ENCODE measurements at regions of chr7 and their contacts with region 1.

Region 1: GRCh38 chr7:75738987-75739795 is 450 bp upstream of the HIP1 start:
- DNase-seq: peak; percentile 99
- H3K4me3 ChIP-seq: peak overlapping the region; percentile 19 to 97
- H3K4me3 Mint-ChIP-seq: peak overlapping the region; percentile 97 to 100 (median 98)
- H3K27ac ChIP-seq: peak overlapping the region; percentile 79
- H3K27ac Mint-ChIP-seq: peak overlapping the region; percentile 94 to 99 (median 98)
- H3K4me1 ChIP-seq: peaks cover 18% of the 10 kb centered on the region
- H3K4me1 Mint-ChIP-seq: peaks cover 7 to 21% (median 13%) of the 10 kb centered on the region in 4 donors
- H3K27me3 ChIP-seq: no peaks in the 10 kb centered on the region
- H3K27me3 Mint-ChIP-seq: peaks cover 1% of the 10 kb centered on the region in 2 donors

Region 2: DNA sequence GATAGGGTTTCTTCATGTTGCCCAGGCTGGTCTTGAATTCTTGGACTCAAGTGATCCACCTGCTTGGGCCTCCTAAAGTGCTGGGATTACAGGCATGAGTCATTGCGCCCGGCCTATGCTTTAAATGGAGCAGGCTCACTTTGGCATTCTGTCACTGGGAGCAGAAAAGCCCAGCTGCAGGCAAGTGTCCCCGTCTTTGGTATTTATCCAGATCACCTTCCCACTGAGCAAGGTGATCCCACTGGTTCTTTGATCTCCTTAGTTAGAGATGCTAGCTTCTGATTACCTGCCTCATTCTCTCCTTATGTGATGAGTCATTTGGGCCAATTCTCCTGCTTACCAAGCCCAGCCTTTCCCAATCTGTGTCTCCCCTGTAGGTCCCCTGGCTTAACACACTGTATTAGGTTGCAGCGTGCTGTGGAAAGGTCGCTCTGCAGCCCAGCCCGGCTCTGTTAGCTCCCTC is 207.8 kb before region 1 on chr7:
- CTCF ChIA-PET with region 1: no interaction called
- POLR2A ChIA-PET with region 1: no interaction called
- intact Hi-C with region 1: loop called (anchors 2 kb)
- DNase-seq: no peak
- H3K4me3 ChIP-seq: no peak overlapping the region
- H3K4me3 Mint-ChIP-seq: no peak overlapping the region
- H3K27ac ChIP-seq: no peak overlapping the region
- H3K27ac Mint-ChIP-seq: peak overlapping the region in 1 of 7 donors; percentile 4
- H3K4me1 ChIP-seq: peaks cover 10% of the 10 kb centered on the region
- H3K4me1 Mint-ChIP-seq: peaks cover 11 to 20% (median 14%) of the 10 kb centered on the region in 4 donors
- H3K27me3 ChIP-seq: no peaks in the 10 kb centered on the region
- H3K27me3 Mint-ChIP-seq: no peaks in the 10 kb centered on the region

Region 3: DNA sequence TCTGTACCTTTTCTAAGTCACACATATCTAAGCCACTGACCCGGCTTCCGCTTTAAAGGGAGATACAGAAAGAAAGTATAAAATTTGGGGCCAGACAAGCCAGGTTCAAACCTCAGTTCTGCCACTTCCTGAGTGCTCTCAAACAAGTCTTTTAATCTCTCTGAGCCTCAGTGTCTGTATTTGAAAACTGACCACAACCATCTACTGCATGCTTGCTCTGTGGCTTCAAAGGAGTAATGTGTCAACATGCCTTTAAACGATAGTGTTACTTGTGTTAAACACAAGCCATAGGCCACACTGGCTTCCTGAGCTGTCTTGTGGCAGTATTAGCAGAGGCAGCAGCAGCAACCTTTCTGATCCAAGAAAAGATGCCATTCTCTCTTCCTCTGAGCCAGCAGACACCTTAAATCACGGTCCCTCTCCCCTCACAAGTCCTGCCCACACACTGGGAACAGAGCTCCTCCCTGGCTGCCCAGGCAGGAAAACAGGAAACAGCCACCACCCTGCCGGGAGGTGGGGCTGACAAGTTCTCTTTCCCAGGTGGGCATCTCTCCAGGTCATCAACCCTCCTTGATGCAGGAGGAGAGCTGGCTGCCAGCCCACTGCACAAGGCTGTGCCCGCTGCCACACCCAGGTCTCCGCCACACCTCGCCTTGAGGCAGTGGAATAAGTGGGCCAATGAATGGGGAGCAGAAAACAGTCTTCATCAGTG is 11.2 kb before region 1 on chr7:
- CTCF ChIA-PET with region 1: no interaction called
- POLR2A ChIA-PET with region 1: interaction called, 24 read pairs
- intact Hi-C with region 1: no loop called
- DNase-seq: peak; percentile 63 to 76 (median 71)
- H3K4me3 ChIP-seq: peak overlapping the region in 1 of 2 donors; percentile 13
- H3K4me3 Mint-ChIP-seq: peak overlapping the region in 7 of 8 donors; percentile 51 to 86 (median 65)
- H3K27ac ChIP-seq: peak overlapping the region; percentile 30
- H3K27ac Mint-ChIP-seq: peak overlapping the region; percentile 67 to 92 (median 89)
- H3K4me1 ChIP-seq: peaks cover 29% of the 10 kb centered on the region
- H3K4me1 Mint-ChIP-seq: peaks cover 16 to 30% (median 22%) of the 10 kb centered on the region in 4 donors
- H3K27me3 ChIP-seq: no peaks in the 10 kb centered on the region
- H3K27me3 Mint-ChIP-seq: no peaks in the 10 kb centered on the region

Region 4: GRCh38 chr7:75762314-75762917 is 23.2 kb after region 1 on chr7:
- CTCF ChIA-PET with region 1: interaction called, 10 read pairs
- POLR2A ChIA-PET with region 1: no interaction called
- intact Hi-C with region 1: loop called (anchors 1 kb)
- DNase-seq: peak in 4 of 5 donors; percentile 50 to 58 (median 54)
- H3K4me3 ChIP-seq: no peak overlapping the region
- H3K4me3 Mint-ChIP-seq: no peak overlapping the region
- H3K27ac ChIP-seq: no peak overlapping the region
- H3K27ac Mint-ChIP-seq: no peak overlapping the region
- H3K4me1 ChIP-seq: no peaks in the 10 kb centered on the region
- H3K4me1 Mint-ChIP-seq: peaks cover 2 to 4% (median 4%) of the 10 kb centered on the region in 4 donors
- H3K27me3 ChIP-seq: no peaks in the 10 kb centered on the region
- H3K27me3 Mint-ChIP-seq: peaks cover 0 to 4% of the 10 kb centered on the region in 2 donors

Measured in CD4-positive, alpha-beta memory T cell (primary cell).